Gastrocnemius medialis (tissue), 4 donors: ENCODE measurements at regions of chr3 and their contacts with region 1.

Region 1: DNA sequence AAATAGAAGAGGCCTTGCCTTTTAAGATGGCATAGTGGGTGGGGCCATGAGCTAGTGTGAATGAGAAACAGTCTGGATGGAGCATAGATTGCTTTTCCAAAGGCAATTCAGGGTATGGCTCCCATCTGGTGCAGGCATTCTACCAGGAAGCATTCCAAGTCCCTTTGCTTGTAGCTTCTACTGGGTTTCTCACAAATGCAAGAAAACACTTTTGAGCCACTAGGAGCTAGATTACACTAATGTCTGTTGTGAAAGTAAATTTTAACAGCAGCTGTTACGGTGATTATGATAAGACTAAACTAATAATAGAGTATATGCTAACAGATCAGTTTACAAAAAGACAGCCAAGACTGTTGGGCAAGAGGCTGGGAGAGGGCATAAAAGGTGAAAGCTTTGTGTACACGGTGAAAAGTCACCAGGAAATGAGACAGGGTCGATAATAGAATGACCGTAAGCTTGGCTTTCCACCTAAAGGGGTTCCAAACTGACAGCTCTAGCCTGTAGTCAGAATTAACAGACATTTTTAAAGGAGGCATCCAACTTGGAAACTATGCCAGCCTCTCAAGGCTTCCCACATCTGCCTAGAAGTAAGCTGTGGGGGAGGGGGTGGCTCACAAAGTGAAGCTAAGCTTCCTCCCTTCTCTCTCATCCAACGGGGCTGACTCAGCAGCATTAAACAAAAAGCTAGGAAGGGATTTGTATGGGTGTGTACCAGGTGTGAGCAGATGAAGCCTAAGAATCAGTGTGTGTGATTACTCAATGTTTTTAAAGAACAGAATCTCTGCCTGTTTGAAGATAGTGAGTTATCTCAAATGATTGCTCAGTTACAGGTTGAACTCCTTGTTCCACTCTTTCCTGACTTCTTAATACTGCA is 61.1 kb upstream of the GPD1L start:
- DNase-seq: peak; percentile 67 to 78
- ATAC-seq: peak; percentile 94 to 96
- H3K4me3 ChIP-seq: peak overlapping the region; percentile 17 to 37 (median 32)
- H3K27ac ChIP-seq: peak overlapping the region; percentile 84 to 88 (median 88)
- H3K4me1 ChIP-seq: peaks cover 28 to 38% of the 10 kb centered on the region in 2 donors
- H3K27me3 ChIP-seq: no peaks in the 10 kb centered on the region
- CTCF ChIP-seq: peak in 2 of 5 experiments; percentile 13 to 26
- POLR2A ChIP-seq: no peak

Region 2: DNA sequence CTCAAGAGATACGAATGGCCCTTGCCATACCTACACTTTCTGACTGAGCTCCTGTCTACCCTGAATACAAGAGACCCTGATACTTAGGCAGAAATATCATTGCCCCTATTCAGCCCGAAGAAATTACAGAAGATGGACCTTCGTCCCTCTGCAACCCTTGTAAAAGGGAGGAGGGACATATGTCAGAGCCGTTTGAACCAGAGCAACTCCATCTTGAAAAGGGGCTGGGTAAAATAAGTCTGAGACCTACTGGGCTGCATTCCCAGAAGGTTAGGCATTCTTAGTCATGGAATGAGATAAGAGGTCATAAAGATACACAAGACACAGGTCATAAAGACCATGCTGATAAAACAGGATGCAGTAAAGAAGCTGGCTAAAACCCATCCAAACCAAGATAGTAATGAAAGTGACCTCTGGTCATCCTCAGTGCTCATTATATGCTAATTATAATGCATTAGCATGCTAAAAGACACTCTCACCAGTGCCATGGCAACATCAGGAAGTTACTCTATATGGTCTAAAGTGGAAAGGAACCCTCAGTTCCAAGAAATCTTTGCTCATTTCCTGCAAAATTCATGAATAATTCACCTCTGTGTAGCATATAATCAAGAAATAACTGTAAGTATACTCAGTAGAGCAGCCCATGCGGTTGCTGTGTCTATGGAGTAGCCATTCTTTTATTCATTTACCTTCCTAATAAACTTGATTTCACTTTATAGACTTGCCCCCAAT is 11.4 kb after region 1 on chr3:
- in situ Hi-C with region 1: no loop called
- intact Hi-C with region 1: loop called (anchors 1 kb)
- DNase-seq: no peak
- ATAC-seq: no peak
- H3K4me3 ChIP-seq: no peak overlapping the region
- H3K27ac ChIP-seq: no peak overlapping the region
- H3K4me1 ChIP-seq: peaks cover 0 to 8% of the 10 kb centered on the region in 2 donors
- H3K27me3 ChIP-seq: no peaks in the 10 kb centered on the region
- CTCF ChIP-seq: no peak
- POLR2A ChIP-seq: no peak

Region 3: GRCh38 chr3:32106280-32106928 is 61.1 kb after region 1 on chr3 and contains the start of gene GPD1L:
- in situ Hi-C with region 1: no loop called
- intact Hi-C with region 1: loop called (anchors 2 kb)
- DNase-seq: peak; percentile 92 to 95
- ATAC-seq: peak; percentile 57 to 60
- H3K4me3 ChIP-seq: peak within 1 kb of the TSS; percentile 63 to 92 (median 78)
- H3K27ac ChIP-seq: peak within 1 kb of the TSS; percentile 86 to 96 (median 94)
- H3K4me1 ChIP-seq: peaks cover 40 to 49% of the 10 kb centered on the region in 2 donors
- H3K27me3 ChIP-seq: no peaks in the 10 kb centered on the region
- CTCF ChIP-seq: no peak
- POLR2A ChIP-seq: peak; percentile 78 to 87
- total RNA-seq, gene GPD1L: 80.8 to 168 (median 91.3) TPM